ENCODE measurements at regions of chr7 and their contacts with region 1.

Region 1: DNA sequence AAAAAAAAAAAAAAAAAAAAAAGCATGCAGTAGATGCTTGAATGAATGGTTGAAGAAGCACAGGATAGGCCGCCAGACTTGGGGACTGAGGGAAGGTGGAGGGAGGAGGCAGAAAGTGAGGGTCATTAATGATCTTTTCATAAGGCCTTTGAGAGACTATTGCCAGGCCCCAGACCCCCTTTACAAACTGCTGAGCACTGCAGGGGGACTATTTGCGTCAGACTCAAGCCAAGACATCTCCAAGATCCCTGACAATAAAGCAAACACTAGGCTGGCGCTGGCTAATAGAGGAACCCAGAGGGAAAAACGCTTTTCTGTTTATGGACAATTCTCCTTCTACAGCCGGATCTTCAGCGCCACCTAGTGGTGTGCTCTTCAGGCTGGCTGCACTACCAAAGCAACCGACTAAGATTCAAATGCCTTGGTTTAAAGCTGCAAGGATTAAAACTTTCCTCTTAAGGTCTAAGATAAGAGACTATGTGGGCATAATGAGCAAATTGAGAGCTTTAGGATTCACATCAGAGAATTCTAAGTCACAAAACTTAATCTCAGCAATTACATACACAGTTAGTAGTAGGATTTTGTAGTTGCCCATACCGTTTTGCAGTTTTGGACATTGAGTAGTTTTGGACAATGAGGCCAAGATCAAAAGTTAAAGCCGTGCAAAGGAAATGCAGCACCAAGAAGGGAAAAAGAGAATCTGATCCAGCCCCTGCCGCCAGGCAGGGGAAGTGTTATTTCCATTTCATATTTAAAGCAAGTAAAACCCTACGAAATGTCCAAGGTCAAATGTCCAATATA is 17.9 kb upstream of the AGK start:
- DNase-seq: peak; percentile 83
- H3K4me3 ChIP-seq: no peak overlapping the region
- H3K27ac ChIP-seq: no peak overlapping the region
- H3K4me1 ChIP-seq: no peaks in the 10 kb centered on the region
- H3K27me3 ChIP-seq: peaks cover 6% of the 10 kb centered on the region
- CTCF ChIP-seq: peak; percentile 96

Region 2: DNA sequence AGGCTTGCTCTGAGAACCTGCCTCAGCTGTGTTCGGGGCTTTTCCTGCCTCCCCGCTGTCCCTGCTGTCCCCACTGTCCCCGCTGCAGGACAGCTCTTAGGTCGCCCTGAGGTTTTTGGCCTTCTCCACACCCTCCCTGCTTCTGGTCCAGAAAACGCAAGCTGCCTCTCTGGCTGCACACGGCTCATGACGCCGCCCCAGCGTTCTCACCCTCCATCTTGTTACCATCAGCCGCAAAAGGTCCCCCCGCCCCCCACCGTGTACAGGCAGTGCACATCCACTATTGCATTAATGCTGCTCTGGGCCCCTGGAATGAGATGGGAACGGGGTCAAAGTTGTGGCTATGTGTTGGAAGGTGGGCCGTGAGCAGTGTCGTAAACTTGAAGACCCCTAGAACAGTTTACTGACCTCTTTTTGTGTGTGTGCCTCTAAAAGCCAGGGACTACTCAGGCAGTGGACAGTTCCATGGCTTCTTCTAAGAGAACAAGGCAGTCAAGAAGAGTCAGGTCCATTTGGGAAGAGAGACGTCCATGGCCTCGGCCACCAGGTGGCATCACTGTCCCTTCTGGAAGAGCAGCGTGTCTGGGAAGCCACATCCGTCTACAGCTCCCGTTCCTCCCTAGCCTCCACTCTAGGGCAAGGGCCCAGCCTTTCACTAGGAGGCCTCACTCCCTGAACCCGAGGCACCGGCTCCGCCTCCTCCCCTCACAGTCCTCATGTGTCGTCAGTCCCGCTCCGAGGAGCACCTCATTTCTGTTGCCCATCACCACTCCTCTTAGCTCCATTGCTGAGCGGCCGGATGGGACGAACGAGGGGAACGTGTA is 1015.6 kb before region 1 on chr7:
- CTCF ChIA-PET with region 1: no interaction called
- POLR2A ChIA-PET with region 1: no interaction called
- intact Hi-C with region 1: loop called (anchors 10 kb)
- DNase-seq: peak; percentile 92
- H3K4me3 ChIP-seq: no peak overlapping the region
- H3K27ac ChIP-seq: no peak overlapping the region
- H3K4me1 ChIP-seq: no peaks in the 10 kb centered on the region
- H3K27me3 ChIP-seq: no peaks in the 10 kb centered on the region
- CTCF ChIP-seq: peak; percentile 85

Region 3: DNA sequence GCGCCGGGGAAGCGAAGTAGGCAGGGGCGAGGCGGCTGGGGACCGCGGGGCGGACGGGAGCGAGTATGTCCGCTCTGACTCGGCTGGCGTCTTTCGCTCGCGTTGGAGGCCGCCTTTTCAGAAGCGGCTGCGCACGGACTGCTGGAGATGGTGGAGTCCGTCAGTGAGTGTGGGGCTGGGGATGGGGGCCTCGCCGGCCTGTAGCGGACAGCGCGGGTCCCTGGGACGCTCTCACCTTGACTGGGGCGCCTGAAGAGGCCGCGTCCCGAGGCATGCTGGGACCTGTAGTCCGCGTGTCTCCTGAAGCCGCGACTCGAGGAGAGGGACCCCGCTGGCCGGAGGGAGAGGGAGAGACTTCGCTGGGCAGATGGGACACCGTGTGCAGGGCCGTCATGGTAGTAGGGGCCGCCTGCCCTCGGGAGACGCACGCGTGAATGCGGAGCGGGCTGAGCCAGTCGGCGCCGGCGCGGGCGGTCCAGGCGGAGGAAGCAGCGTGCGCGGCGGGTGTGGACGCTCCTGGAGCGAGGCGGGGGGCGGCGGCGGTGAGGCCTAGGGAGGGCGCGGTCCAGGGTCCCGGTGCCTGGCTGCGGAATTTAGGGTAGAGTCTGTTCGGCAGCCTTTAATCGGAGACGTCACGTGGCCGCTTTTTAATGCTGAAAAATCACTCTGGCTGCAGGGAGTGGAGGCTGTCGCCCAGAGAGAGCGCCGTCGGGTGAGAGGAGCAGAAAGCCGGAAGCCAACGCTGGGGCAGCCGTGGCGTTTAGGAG is 836.5 kb before region 1 on chr7 and contains the start of gene NDUFB2:
- CTCF ChIA-PET with region 1: no interaction called
- POLR2A ChIA-PET with region 1: no interaction called
- intact Hi-C with region 1: loop called (anchors 10 kb)
- DNase-seq: peak; percentile 89
- H3K4me3 ChIP-seq: peak within 1 kb of the TSS; percentile 81
- H3K27ac ChIP-seq: peak within 1 kb of the TSS; percentile 89
- H3K4me1 ChIP-seq: peaks cover 15% of the 10 kb centered on the region
- H3K27me3 ChIP-seq: no peaks in the 10 kb centered on the region
- CTCF ChIP-seq: no peak
- total RNA-seq, gene NDUFB2: 180 and 192 TPM in 2 replicates

Region 4: DNA sequence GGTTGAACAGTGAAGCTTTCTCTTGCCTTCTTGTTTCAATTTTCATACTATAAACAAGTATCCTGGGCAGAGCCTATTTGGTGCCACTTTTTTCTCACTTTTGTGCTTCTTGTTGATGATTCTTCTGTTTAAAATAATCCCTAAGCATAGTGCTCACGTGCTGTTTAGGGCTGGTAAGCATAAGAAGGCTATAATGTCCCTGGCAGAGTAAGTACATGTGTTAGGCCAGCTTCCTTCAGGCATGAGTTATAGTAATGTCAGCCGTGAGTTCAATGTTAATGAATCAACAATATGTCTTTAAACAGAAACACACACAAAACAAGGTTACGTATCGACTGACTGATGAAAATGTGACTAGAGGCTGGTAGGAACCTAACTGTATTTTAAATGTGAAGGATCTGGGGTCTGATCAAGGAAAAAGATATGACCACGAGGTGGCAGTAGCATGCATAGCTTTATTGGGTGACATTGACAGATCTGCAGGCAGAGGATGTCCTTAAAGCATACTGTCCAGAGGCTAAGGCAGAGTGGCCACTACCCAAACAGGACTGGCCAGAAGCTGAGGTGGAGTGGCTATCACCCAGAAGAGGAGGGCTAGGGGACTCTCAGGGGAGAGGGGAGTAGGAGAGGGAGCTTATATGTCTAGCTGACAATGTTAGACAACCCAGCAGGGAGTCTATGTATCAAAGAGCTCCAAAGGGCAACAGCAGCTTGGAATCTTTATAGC is 722.4 kb before region 1 on chr7:
- CTCF ChIA-PET with region 1: interaction called, 4 read pairs
- POLR2A ChIA-PET with region 1: no interaction called
- intact Hi-C with region 1: loop called (anchors 1 kb)
- DNase-seq: peak; percentile 72
- H3K4me3 ChIP-seq: no peak overlapping the region
- H3K27ac ChIP-seq: no peak overlapping the region
- H3K4me1 ChIP-seq: peaks cover 4% of the 10 kb centered on the region
- H3K27me3 ChIP-seq: no peaks in the 10 kb centered on the region
- CTCF ChIP-seq: peak; percentile 85

Region 5: GRCh38 chr7:141072548-141073172 is 460.7 kb before region 1 on chr7:
- CTCF ChIA-PET with region 1: no interaction called
- POLR2A ChIA-PET with region 1: no interaction called
- intact Hi-C with region 1: loop called (anchors 1 kb)
- DNase-seq: peak; percentile 75
- H3K4me3 ChIP-seq: peak overlapping the region; percentile 45
- H3K27ac ChIP-seq: no peak overlapping the region
- H3K4me1 ChIP-seq: peaks cover 16% of the 10 kb centered on the region
- H3K27me3 ChIP-seq: peaks cover 80% of the 10 kb centered on the region
- CTCF ChIP-seq: no peak

Region 6: GRCh38 chr7:141102436-141102835 is 430.9 kb before region 1 on chr7:
- CTCF ChIA-PET with region 1: no interaction called
- POLR2A ChIA-PET with region 1: no interaction called
- intact Hi-C with region 1: no loop called
- DNase-seq: no peak
- H3K4me3 ChIP-seq: no peak overlapping the region
- H3K27ac ChIP-seq: no peak overlapping the region
- H3K4me1 ChIP-seq: no peaks in the 10 kb centered on the region
- H3K27me3 ChIP-seq: no peaks in the 10 kb centered on the region
- CTCF ChIP-seq: no peak

Region 7: GRCh38 chr7:141262101-141263090 is 271.0 kb before region 1 on chr7:
- CTCF ChIA-PET with region 1: no interaction called
- POLR2A ChIA-PET with region 1: no interaction called
- intact Hi-C with region 1: loop called (anchors 2 kb)
- DNase-seq: peak; percentile 29
- H3K4me3 ChIP-seq: no peak overlapping the region
- H3K27ac ChIP-seq: no peak overlapping the region
- H3K4me1 ChIP-seq: no peaks in the 10 kb centered on the region
- H3K27me3 ChIP-seq: no peaks in the 10 kb centered on the region
- CTCF ChIP-seq: peak; percentile 44

Measured in A673 (cell line).